ENCODE measurements at regions of chr10 and their contacts with region 1.

Region 1: GRCh38 chr10:73529089-73529832 is 33.4 kb upstream of the PPP3CB start:
- DNase-seq: peak; percentile 80
- H3K4me3 Mint-ChIP-seq: no peak overlapping the region
- H3K27ac Mint-ChIP-seq: no peak overlapping the region
- H3K4me1 Mint-ChIP-seq: no peaks in the 10 kb centered on the region
- H3K27me3 Mint-ChIP-seq: no peaks in the 10 kb centered on the region
- CTCF ChIP-seq: peak; percentile 87

Region 2: DNA sequence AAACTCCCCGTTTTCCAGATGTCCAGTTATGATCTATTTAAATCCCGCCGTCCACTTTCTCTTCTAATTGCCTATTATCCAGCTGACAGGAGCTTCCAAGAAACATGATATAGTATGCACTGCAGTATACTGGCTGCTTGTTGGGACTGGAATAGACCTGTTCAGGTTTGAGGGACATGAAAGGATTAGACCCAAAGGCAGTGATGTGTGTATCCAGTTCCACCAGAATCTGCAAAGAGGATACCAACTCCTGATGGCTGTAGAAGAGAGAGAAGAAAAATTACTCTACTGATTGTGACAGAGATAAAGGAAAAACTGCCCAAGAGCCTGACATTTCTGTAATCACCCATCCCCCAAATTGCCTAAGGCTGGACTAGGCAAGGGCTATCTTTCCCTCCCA is 104.7 kb before region 1 on chr10:
- CTCF ChIA-PET with region 1: no interaction called
- POLR2A ChIA-PET with region 1: no interaction called
- intact Hi-C with region 1: no loop called
- DNase-seq: no peak
- H3K4me3 Mint-ChIP-seq: no peak overlapping the region
- H3K27ac Mint-ChIP-seq: no peak overlapping the region
- H3K4me1 Mint-ChIP-seq: no peaks in the 10 kb centered on the region
- H3K27me3 Mint-ChIP-seq: no peaks in the 10 kb centered on the region
- CTCF ChIP-seq: no peak

Region 3: GRCh38 chr10:73512207-73512743 is 17.0 kb before region 1 on chr10:
- CTCF ChIA-PET with region 1: interaction called, 12 read pairs
- POLR2A ChIA-PET with region 1: interaction called, 3 read pairs
- intact Hi-C with region 1: no loop called
- DNase-seq: no peak
- H3K4me3 Mint-ChIP-seq: no peak overlapping the region
- H3K27ac Mint-ChIP-seq: no peak overlapping the region
- H3K4me1 Mint-ChIP-seq: no peaks in the 10 kb centered on the region
- H3K27me3 Mint-ChIP-seq: no peaks in the 10 kb centered on the region
- CTCF ChIP-seq: no peak

Region 4: GRCh38 chr10:73552819-73553715 is 23.8 kb after region 1 on chr10:
- CTCF ChIA-PET with region 1: interaction called, 12 read pairs
- POLR2A ChIA-PET with region 1: no interaction called
- intact Hi-C with region 1: no loop called
- DNase-seq: no peak
- H3K4me3 Mint-ChIP-seq: peak overlapping the region; percentile 32
- H3K27ac Mint-ChIP-seq: peak overlapping the region; percentile 28
- H3K4me1 Mint-ChIP-seq: peaks cover 17% of the 10 kb centered on the region
- H3K27me3 Mint-ChIP-seq: no peaks in the 10 kb centered on the region
- CTCF ChIP-seq: no peak

Region 5: DNA sequence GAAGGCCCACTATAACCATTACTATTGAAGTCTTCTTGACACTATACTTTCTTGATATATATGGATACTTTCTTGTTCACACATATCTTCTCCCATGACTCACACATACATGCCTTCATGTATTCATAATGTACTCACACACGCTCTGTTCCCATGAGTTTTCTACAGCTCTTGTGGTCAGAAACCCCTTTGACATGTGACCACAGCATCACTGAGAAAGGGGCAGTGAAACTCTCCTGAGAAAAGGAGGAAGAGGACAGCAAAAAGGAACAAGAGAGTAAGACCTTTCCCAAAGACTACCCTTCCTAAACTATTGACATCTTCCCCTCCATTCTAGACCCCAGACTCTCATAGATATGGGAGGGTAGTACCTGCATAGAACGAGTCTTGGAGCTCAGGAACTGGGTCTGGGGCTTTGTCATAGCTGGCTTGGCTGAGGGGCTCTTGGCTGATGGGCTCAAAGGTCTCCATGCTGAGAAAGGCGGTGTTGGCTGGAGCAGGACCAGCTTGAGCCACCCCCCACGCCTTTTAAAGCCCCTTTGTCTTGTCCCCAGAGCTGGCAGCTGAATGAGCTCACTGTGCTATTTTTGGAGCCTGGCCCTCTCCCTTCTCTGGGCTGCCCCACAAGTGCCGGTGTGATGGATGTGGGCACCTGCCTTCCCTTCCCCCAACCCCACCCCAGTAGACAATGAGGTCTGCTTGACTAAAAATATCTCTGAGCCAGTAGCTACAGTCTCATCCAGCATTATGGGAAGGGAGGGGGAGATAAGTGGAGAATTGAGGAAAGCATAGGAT is 121.5 kb after region 1 on chr10:
- CTCF ChIA-PET with region 1: interaction called, 222 read pairs
- POLR2A ChIA-PET with region 1: no interaction called
- intact Hi-C with region 1: no loop called
- DNase-seq: no peak
- H3K4me3 Mint-ChIP-seq: no peak overlapping the region
- H3K27ac Mint-ChIP-seq: no peak overlapping the region
- H3K4me1 Mint-ChIP-seq: no peaks in the 10 kb centered on the region
- H3K27me3 Mint-ChIP-seq: no peaks in the 10 kb centered on the region
- CTCF ChIP-seq: no peak

Measured in MCF 10A (cell line).